ENCODE measurements at regions of chr3 and their contacts with region 1.

Region 1: GRCh38 chr3:96863129-96863740 is 48.8 kb downstream of the EPHA6 start:
- DNase-seq: peak; percentile 51
- H3K4me3 Mint-ChIP-seq: no peak overlapping the region
- H3K27ac Mint-ChIP-seq: no peak overlapping the region
- H3K4me1 Mint-ChIP-seq: no peaks in the 10 kb centered on the region
- H3K27me3 Mint-ChIP-seq: no peaks in the 10 kb centered on the region
- CTCF ChIP-seq: peak; percentile 67

Region 2: DNA sequence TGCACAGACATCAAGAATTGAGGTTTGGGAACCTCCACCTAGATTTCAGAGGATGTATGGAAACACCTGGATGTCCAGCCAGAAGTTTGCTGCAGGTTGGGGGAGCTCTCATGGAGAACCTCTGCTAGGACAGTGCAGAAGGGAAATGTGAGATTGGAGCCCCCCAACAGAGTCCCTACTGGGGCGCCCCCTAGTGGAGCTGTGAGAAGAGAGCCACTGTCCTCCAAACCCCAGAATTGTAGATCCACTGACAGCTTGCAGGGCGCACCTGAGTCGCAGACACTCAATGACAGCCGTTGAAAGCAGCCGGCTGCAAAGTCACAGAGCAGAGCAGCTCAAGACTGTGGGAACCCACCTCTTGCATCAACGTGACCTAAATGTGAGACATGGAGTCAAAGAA is 83.4 kb before region 1 on chr3:
- CTCF ChIA-PET with region 1: no interaction called
- intact Hi-C with region 1: no loop called
- DNase-seq: no peak
- H3K4me3 Mint-ChIP-seq: no peak overlapping the region
- H3K27ac Mint-ChIP-seq: no peak overlapping the region
- H3K4me1 Mint-ChIP-seq: no peaks in the 10 kb centered on the region
- H3K27me3 Mint-ChIP-seq: no peaks in the 10 kb centered on the region
- CTCF ChIP-seq: no peak

Region 3: GRCh38 chr3:97099381-97099780 is 236.1 kb after region 1 on chr3:
- CTCF ChIA-PET with region 1: no interaction called
- intact Hi-C with region 1: no loop called
- DNase-seq: no peak
- H3K4me3 Mint-ChIP-seq: no peak overlapping the region
- H3K27ac Mint-ChIP-seq: no peak overlapping the region
- H3K4me1 Mint-ChIP-seq: no peaks in the 10 kb centered on the region
- H3K27me3 Mint-ChIP-seq: no peaks in the 10 kb centered on the region
- CTCF ChIP-seq: no peak

Region 4: GRCh38 chr3:97111244-97111643 is 248.0 kb after region 1 on chr3:
- CTCF ChIA-PET with region 1: no interaction called
- intact Hi-C with region 1: loop called (anchors 10 kb)
- DNase-seq: no peak
- H3K4me3 Mint-ChIP-seq: no peak overlapping the region
- H3K27ac Mint-ChIP-seq: no peak overlapping the region
- H3K4me1 Mint-ChIP-seq: no peaks in the 10 kb centered on the region
- H3K27me3 Mint-ChIP-seq: no peaks in the 10 kb centered on the region
- CTCF ChIP-seq: no peak

Region 5: GRCh38 chr3:97658668-97659285 is 795.5 kb after region 1 on chr3:
- CTCF ChIA-PET with region 1: no interaction called
- intact Hi-C with region 1: loop called (anchors 1 kb)
- DNase-seq: peak; percentile 8
- H3K4me3 Mint-ChIP-seq: no peak overlapping the region
- H3K27ac Mint-ChIP-seq: no peak overlapping the region
- H3K4me1 Mint-ChIP-seq: no peaks in the 10 kb centered on the region
- H3K27me3 Mint-ChIP-seq: no peaks in the 10 kb centered on the region
- CTCF ChIP-seq: peak; percentile 58

Region 6: DNA sequence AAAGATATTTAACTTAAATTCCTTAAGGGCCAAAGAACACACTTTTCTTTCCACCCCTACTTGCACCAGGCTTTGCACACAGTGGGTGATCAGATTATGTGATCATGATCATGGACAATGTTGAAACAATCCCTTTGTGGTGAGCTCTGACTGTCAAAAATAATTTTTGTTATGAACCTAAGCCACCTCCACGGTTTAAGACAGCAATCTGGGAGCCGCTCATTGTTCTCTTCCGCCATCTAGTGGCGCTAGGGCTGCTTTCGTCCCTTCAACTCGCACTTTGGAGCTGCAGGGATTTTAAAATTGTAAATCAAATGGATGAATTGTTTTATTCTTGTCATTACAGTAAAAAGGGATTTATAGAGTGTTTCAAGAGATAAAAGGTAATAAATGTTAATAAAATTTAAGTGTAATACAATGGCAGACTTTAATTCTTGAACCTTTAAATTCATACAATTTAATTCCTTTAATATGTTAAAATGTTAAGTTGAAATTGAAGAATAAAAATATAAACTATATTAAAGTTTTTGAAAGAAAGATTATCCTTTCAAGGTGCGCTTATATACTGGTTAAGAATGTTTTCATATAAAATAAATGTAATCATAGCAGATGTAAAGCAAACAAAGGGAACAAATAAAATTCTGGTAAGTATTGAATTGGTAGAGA is 856.1 kb after region 1 on chr3:
- CTCF ChIA-PET with region 1: interaction called, 7 read pairs
- intact Hi-C with region 1: loop called (anchors 1 kb)
- DNase-seq: peak; percentile 67
- H3K4me3 Mint-ChIP-seq: no peak overlapping the region
- H3K27ac Mint-ChIP-seq: no peak overlapping the region
- H3K4me1 Mint-ChIP-seq: no peaks in the 10 kb centered on the region
- H3K27me3 Mint-ChIP-seq: no peaks in the 10 kb centered on the region
- CTCF ChIP-seq: peak; percentile 74